Panc1 (cell line): ENCODE measurements at regions of chr22 and their contacts with region 1.

Region 1: GRCh38 chr22:46122511-46122971 is 27.8 kb upstream of the PPARA start:
- DNase-seq: no peak
- ATAC-seq: peak; percentile 64
- H3K4me3 ChIP-seq: no peak overlapping the region
- H3K27ac ChIP-seq: no peak overlapping the region
- H3K4me1 ChIP-seq: peaks cover 16% of the 10 kb centered on the region
- H3K27me3 ChIP-seq: no peaks in the 10 kb centered on the region
- CTCF ChIP-seq: peak; percentile 91

Region 2: GRCh38 chr22:46025225-46025972 is 97.1 kb before region 1 on chr22:
- CTCF ChIA-PET with region 1: interaction called, 17 read pairs
- POLR2A ChIA-PET with region 1: no interaction called
- in situ Hi-C with region 1: no loop called
- intact Hi-C with region 1: no loop called
- DNase-seq: no peak
- ATAC-seq: no peak
- H3K4me3 ChIP-seq: no peak overlapping the region
- H3K27ac ChIP-seq: no peak overlapping the region
- H3K4me1 ChIP-seq: peaks cover 4% of the 10 kb centered on the region; the same call in 1 of the 2 replicates
- H3K27me3 ChIP-seq: no peaks in the 10 kb centered on the region
- CTCF ChIP-seq: no peak

Region 3: DNA sequence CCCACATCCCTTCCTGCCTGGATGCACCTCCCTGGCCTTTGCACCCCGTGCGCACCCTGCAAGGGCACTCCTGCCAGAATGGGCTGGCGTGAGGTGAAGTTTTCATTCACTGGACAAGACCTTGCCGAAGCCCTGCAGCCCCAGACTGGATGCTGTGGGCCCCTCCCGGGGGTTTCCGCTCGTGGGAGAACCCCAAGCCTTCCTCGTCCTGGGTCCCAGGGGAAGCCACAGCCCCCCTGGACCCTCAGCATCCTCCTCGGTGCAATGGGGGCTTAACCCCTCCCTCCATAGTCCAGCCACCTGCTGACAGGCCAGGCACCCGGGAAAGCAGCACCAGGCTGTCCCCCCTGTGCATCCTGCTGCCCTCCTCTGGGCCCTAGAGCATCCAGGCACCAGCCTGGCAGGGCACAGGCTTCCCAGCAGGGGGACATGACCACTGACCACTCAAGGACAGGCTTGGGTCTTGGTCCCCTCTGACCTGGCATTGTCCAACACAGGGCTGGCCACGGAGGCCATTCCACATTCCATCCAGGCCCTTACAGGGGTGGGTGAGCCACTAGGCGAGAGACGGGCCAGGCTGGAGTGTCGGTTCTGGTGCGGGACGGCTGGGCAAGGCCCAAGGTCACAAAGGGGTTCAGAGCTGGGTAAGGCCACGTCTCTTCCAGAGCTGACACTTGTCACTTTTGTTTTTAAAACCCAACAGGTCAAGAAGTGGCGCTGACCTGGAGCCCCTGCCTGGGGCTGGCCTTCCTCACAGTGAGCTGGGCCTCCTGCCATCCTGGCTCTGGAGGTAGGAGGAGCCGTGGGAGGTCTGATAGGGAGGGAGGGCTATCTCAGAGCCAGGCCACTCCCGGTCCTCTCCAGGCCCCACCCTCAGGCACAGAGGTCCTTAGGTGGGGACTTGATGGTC is 13.7 kb before region 1 on chr22:
- CTCF ChIA-PET with region 1: no interaction called
- POLR2A ChIA-PET with region 1: no interaction called
- in situ Hi-C with region 1: no loop called
- intact Hi-C with region 1: no loop called
- DNase-seq: no peak
- ATAC-seq: peak; percentile 38
- H3K4me3 ChIP-seq: no peak overlapping the region
- H3K27ac ChIP-seq: peak overlapping the region; percentile 89
- H3K4me1 ChIP-seq: peaks cover 97% of the 10 kb centered on the region
- H3K27me3 ChIP-seq: no peaks in the 10 kb centered on the region
- CTCF ChIP-seq: no peak

Region 4: DNA sequence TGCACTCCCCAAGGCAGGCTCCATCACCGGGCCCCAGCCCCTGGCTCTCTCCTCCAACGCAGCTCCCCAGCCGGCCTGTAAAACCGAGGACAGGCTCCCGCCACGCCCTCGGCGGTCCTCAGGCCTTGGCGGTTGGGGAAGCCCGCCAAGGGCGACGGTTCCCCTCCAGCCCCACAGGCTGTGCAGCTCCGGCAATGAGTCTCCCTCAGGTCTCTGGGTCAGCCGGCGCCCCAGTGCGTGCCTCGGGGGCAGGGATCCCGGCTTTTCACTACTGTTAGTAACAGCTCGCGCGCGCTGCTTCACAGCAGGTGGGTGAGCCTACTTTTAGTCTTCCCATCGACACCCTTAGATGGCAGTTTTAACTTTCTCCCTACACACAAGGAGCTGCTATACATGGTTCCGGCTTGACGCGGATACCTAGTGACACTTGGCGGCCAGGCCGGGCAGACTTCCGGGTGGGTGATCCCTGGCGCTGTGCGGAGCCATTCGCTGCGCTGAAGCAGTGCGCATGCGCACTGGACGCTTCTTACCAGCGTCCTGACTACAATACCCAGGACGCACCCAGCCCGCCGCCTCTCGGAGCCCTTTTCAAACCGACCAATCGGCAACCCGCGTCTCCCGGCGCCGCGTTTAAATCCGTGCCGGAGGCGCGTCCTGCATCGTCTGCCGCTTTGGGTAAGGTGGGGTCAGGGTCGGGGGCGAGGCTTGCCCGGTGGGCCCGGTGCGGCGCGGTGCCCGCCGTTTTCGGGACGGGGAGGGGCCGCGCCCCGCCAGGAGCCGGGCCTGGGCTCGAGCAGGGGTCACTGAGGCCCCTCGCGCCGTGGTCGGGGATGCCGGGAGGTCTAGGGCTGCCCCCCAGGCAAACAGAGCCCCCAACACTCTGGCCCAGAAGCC is 174.0 kb after region 1 on chr22 and contains the start of gene GTSE1:
- CTCF ChIA-PET with region 1: no interaction called
- POLR2A ChIA-PET with region 1: interaction called, 3 read pairs
- in situ Hi-C with region 1: no loop called
- intact Hi-C with region 1: loop called (anchors 5 kb)
- DNase-seq: peak; percentile 87
- ATAC-seq: peak; percentile 98
- H3K4me3 ChIP-seq: peak within 1 kb of the TSS; percentile 73 to 74
- H3K27ac ChIP-seq: peak within 1 kb of the TSS; percentile 82
- H3K4me1 ChIP-seq: no peaks in the 10 kb centered on the region; the same call in 1 of the 2 replicates
- H3K27me3 ChIP-seq: no peaks in the 10 kb centered on the region
- CTCF ChIP-seq: no peak
- total RNA-seq, gene GTSE1: 36.2 TPM

Region 5: DNA sequence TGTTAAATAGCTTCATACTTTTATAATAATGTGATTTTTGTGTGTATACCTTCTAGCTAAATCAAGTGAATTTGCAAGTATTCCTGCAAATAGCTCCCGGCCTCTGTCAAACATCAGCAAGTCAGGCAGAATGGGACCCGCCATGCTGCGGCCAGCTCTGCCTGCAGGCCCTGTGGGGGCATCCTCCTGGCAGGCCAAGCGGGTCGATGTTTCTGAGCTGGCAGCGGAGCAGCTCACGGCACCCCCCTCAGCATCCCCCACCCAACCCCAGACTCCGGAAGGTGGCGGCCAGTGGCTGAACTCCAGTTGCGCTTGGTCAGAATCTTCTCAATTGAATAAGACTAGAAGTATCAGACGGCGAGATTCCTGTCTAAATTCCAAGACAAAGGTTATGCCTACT is 193.4 kb after region 1 on chr22:
- CTCF ChIA-PET with region 1: interaction called, 5 read pairs
- POLR2A ChIA-PET with region 1: no interaction called
- in situ Hi-C with region 1: no loop called
- intact Hi-C with region 1: loop called (anchors 2 kb)
- DNase-seq: no peak
- ATAC-seq: no peak
- H3K4me3 ChIP-seq: no peak overlapping the region
- H3K27ac ChIP-seq: no peak overlapping the region
- H3K4me1 ChIP-seq: no peaks in the 10 kb centered on the region
- H3K27me3 ChIP-seq: no peaks in the 10 kb centered on the region
- CTCF ChIP-seq: no peak